ENCODE measurements at regions of chr6 and their contacts with region 1.

Region 1: DNA sequence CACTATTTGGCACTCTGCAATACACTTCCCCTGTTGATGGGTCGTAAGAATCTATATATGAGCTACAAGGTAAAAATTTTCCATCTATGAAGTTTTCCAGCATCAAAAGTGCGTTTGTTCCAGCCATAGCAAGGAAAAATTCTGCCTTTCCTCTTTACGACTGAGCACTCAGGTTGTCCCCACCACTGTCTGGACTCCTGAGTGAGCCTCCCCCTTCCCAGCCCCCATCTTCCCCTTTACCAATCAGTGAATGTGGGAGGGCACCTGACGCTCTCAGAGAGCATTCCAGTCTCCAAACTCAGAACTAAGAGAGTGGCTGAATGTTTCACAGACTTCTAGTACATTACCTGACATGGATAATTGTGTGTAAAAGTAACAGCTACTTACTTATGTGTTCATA is at the start of gene ALDH8A1:
- DNase-seq: no peak
- ATAC-seq: no peak
- H3K4me3 ChIP-seq: no peak within 1 kb of the TSS
- H3K27ac ChIP-seq: no peak within 1 kb of the TSS
- H3K4me1 ChIP-seq: no peaks in the 10 kb centered on the region
- H3K27me3 ChIP-seq: no peaks in the 10 kb centered on the region
- CTCF ChIP-seq: no peak
- total RNA-seq, gene ALDH8A1: 0.09 to 0.42 (median 0.24) TPM in 5 of 10 donors, not detected in the others

Region 2: GRCh38 chr6:134152767-134153485 is 797.0 kb before region 1 on chr6:
- intact Hi-C with region 1: loop called in 1 of 10 experiments (anchors 10 kb)
- DNase-seq: no peak
- ATAC-seq: peak in 1 of 8 donors; percentile 35
- H3K4me3 ChIP-seq: no peak overlapping the region
- H3K27ac ChIP-seq: no peak overlapping the region
- H3K4me1 ChIP-seq: peaks cover 0 to 5% (median 0%) of the 10 kb centered on the region in 9 donors
- H3K27me3 ChIP-seq: no peaks in the 10 kb centered on the region
- CTCF ChIP-seq: no peak

Region 3: GRCh38 chr6:135075018-135075417 is 125.1 kb after region 1 on chr6:
- intact Hi-C with region 1: no loop called
- DNase-seq: no peak
- ATAC-seq: no peak
- H3K4me3 ChIP-seq: no peak overlapping the region
- H3K27ac ChIP-seq: no peak overlapping the region
- H3K4me1 ChIP-seq: no peaks in the 10 kb centered on the region
- H3K27me3 ChIP-seq: peaks cover 0 to 11% (median 0%) of the 10 kb centered on the region in 7 donors
- CTCF ChIP-seq: no peak

Measured in heart right ventricle (tissue), 16 donors.